ENCODE measurements at regions of chr7 and their contacts with region 1.

Region 1: DNA sequence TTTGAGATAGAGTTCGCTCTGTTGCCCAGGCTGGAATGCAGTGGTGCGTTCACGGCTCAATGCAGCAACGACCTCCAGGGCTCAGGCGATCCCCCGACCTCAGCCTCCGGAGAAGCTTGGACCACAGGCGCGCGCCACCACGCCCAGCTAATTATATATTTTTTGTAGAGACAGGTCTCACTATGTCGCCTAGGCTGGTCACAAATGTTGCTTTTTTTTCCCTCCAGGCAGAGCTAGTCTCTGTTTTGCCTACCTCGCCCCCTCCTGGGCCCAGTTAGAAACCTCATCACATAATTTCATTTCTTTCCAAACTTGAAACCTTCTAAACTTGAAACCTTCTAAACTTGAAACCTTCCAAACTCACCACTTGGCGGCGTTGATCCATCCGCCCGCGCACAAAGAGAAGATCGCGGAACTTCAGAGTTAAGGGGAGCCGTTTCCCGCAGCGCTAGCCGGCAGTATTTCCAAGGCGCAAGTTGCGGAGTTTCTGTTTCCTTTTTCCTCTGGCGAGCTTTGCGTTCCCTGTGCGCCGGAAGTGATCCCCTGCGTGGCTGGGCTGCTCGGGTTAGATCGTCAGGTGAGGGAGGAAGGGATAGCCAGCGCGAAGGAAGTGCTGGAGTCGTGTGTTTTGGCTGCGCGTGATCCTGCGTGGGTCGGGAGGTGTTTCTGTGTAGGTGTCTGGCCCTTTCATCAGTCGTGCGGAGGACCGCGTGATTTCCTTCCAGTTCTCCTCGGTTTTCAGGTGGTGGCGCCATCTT is at the start of gene SSBP1:
- DNase-seq: peak; percentile 94
- total RNA-seq, gene SSBP1: 84.2 TPM

Region 2: GRCh38 chr7:141654551-141654950 is 83.5 kb before region 1 on chr7:
- intact Hi-C with region 1: loop called (anchors 5 kb)
- DNase-seq: no peak

Region 3: GRCh38 chr7:141701489-141702046 is 36.4 kb before region 1 on chr7:
- intact Hi-C with region 1: loop called (anchors 5 kb)
- DNase-seq: peak; percentile 75

Region 4: DNA sequence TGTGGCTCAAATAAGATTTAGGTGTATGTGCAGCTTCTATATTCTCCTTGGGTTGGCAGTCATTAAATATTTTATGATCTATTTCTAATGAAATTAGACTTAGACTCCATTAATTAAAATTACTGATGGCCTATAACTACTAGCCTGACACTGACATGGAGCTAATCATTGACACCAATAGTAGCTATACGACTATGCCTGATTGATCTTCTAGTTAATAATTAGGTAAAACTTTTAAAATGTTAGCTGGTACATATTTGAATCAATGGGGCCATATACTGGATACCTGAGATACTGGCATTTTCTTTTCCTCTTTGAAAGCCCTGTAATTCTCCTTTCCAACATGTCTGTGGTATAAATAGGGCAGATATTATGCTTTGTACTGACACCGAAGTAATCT is 15.5 kb before region 1 on chr7:
- intact Hi-C with region 1: no loop called
- DNase-seq: no peak

Region 5: GRCh38 chr7:141792526-141792925 is 54.5 kb after region 1 on chr7:
- intact Hi-C with region 1: no loop called
- DNase-seq: no peak

Measured in cardiac septum (tissue), 1 donor.